ENCODE measurements at regions of chr13 and their contacts with region 1.

Region 1: GRCh38 chr13:42392716-42393572 is 121.0 kb downstream of the AKAP11 start:
- DNase-seq: peak; percentile 49
- H3K4me3 Mint-ChIP-seq: peak overlapping the region; percentile 92
- H3K27ac Mint-ChIP-seq: peak overlapping the region; percentile 100
- H3K4me1 Mint-ChIP-seq: peaks cover 75% of the 10 kb centered on the region
- H3K27me3 Mint-ChIP-seq: no peaks in the 10 kb centered on the region

Region 2: DNA sequence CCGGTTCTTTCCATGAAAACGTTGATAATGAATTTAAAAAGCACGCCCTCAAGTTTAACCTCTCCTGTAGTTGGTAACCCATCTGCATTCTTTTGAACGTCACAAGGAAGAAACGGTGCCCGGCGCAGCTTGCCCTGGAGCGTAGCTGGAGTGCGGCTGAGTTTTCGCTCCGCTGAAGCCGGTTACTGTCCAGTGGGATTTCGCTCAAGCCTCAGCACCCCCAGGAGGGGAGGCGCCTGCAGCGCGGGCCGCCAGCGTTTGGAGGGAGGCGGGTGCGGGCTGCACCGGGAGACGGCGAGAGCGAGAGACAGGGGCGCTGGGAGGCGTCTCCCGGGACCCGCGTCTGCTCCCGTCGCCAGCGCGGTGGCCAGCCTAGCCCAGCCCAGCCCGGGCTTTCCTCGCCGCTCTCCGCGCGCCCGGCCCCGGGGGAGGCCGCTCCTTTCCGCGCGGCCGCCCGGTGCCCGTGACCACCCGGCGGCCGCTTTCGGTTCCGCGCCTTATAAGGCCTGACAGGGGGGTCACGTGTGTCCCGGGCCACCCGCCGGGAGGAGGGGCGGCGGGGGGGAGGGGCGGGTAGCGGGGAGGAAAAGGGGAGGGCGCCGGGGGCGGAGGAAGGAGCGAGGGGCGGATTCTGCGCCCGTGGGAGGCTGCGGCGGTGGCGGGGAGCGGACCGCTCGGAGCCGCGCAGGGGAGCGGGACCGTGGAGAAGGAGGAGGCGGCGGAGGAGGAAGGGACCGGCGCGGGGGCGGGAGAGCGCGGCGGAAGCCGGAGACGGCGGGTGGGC is 352.8 kb before region 1 on chr13:
- intact Hi-C with region 1: loop called (anchors 10 kb)
- DNase-seq: peak; percentile 80
- H3K4me3 Mint-ChIP-seq: peak overlapping the region; percentile 84
- H3K27ac Mint-ChIP-seq: peak overlapping the region; percentile 67
- H3K4me1 Mint-ChIP-seq: peaks cover 17% of the 10 kb centered on the region
- H3K27me3 Mint-ChIP-seq: peaks cover 38% of the 10 kb centered on the region

Region 3: GRCh38 chr13:42328672-42329071 is 64.3 kb before region 1 on chr13:
- intact Hi-C with region 1: loop called (anchors 2 kb)
- DNase-seq: no peak
- H3K4me3 Mint-ChIP-seq: no peak overlapping the region
- H3K27ac Mint-ChIP-seq: peak overlapping the region; percentile 79
- H3K4me1 Mint-ChIP-seq: peaks cover 40% of the 10 kb centered on the region
- H3K27me3 Mint-ChIP-seq: no peaks in the 10 kb centered on the region

Region 4: DNA sequence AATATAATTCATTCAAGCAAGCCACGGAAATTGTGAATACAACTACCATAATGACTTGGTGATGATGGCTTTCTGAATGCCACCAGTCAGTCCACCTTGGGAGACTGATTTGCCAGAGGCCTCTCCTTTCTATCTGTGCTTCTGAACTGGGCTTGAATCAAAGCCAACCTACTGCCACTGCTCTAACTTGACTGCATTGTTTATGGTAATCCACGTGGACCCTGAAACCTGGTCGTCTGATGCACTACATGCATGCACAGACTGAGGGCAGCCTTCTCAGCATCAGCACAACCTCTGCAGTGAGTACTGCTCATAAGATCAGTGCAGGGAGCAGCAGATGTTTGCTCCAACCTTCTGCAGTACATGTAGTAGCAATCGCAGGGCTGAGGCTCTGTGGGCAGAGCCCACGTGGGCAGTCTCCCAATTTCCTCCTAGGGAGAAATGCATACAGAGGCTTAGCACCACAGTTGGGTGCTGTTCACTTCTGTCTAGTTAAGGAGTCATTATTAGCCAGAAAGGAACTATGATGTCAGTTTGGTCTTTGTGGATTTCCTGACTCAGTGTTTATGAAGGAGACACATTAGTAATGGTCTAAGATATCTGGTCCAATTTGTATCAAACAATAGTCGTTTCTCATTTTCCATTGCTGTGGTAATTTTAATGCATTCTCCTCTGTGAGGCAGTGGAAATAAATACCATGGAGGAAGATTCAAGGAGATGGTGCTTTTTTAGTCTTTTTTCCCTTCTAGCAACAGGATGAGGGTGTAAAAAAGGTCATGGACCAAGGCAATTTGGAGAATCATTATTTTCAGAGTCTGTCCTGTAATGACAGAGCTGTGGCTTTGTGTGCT is 38.5 kb before region 1 on chr13:
- intact Hi-C with region 1: loop called (anchors 1 kb)
- DNase-seq: no peak
- H3K4me3 Mint-ChIP-seq: peak overlapping the region; percentile 77
- H3K27ac Mint-ChIP-seq: peak overlapping the region; percentile 100
- H3K4me1 Mint-ChIP-seq: peaks cover 64% of the 10 kb centered on the region
- H3K27me3 Mint-ChIP-seq: no peaks in the 10 kb centered on the region

Region 5: GRCh38 chr13:42405665-42406390 is 12.9 kb after region 1 on chr13:
- intact Hi-C with region 1: loop called (anchors 1 kb)
- DNase-seq: no peak
- H3K4me3 Mint-ChIP-seq: peak overlapping the region; percentile 62
- H3K27ac Mint-ChIP-seq: peak overlapping the region; percentile 96
- H3K4me1 Mint-ChIP-seq: peaks cover 68% of the 10 kb centered on the region
- H3K27me3 Mint-ChIP-seq: no peaks in the 10 kb centered on the region

Region 6: DNA sequence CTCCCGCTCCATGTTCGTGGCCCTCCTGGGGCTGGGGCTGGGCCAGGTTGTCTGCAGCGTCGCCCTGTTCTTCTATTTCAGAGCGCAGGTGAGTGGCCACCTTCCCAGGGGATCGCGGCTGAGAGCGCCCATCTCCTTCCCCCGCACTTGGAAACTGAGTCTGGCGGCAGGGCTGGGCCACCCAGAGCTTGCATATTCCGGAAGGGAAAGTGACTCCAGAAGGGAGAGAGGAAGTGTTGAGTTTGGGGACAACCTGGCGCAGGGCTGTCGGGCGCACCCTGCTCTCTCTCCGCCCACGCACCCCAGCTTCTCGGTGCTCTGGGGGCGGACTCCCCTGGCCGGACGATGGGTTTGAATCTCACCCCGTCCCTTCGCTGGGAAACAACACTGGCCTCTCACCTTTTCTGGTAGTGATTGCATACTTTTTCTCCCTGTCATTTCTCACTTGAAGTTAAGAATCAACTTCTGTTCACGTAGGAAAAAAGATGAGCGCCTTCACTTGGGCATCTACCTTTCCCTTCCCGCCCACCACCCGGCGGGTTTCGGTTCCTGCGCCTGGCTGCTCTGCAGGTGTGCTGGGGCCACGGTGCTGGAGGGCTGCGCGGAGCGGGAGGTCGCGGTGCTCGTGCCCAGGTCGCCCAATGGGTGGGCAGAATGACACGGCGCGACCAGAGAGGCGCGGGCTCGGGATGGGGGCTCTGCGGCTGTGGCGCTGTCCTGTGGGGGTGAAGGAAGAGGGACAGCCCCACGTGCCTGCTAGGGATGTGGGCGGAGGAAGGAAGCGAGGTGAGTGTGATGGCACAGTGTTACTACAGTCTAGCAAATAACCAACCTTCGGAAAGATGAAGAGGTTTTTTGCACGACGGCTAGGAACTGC is 181.7 kb after region 1 on chr13:
- intact Hi-C with region 1: loop called (anchors 1 kb)
- DNase-seq: peak; percentile 30
- H3K4me3 Mint-ChIP-seq: peak overlapping the region; percentile 74
- H3K27ac Mint-ChIP-seq: peak overlapping the region; percentile 75
- H3K4me1 Mint-ChIP-seq: peaks cover 43% of the 10 kb centered on the region
- H3K27me3 Mint-ChIP-seq: peaks cover 5% of the 10 kb centered on the region

Region 7: DNA sequence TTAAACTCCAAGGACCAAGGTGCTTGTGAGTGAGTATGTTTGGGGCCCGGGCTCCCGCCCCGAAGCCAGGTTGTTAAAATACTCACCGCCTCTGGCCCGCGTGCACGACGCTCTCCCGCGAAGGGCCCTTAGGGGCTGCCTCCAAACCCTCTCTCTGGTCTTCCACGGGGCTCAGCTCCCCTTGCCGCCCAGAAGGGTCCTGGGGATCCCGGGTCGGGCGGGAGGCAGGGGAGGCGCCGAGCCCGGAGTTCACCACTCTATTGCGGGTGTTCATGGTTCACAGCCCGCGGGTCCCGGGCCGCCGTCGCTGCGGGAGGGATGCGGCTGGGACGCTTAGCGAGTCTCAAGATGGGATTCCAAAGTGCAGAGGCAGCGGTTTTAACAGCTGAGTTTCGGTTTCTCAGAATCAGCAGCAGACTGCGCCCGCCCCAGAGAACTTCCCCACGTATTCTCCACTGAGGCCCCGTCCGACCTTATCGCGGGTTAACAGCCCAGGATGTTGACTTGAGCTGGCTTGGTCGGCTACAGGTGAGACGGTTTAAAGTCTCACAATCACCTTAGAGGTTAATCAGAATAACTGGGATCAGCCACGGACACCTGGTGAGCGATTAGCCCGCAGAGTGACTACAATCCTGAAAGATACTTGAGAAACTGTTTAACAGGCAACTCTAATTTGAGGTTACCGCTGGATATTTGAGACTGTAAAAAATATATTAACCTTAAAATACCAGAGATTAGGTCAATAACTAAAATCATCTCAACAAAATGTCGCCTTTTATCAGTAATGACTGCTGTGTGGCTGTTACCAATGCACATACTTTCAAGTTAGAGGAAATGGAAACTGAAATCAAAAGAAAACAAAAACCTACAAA is 599.2 kb after region 1 on chr13 and contains the start of gene EPSTI1:
- intact Hi-C with region 1: no loop called
- DNase-seq: peak; percentile 79
- H3K4me3 Mint-ChIP-seq: peak within 1 kb of the TSS; percentile 93
- H3K27ac Mint-ChIP-seq: peak within 1 kb of the TSS; percentile 96
- H3K4me1 Mint-ChIP-seq: peaks cover 64% of the 10 kb centered on the region
- H3K27me3 Mint-ChIP-seq: no peaks in the 10 kb centered on the region
- total RNA-seq, gene EPSTI1: 10.3 and 11.9 TPM in 2 replicates